ENCODE measurements at regions of chr1 and their contacts with region 1.

Region 1: GRCh38 chr1:64459743-64460142 is 10.2 kb upstream of the CACHD1 start:
- DNase-seq: no peak
- H3K4me3 ChIP-seq: no peak overlapping the region
- H3K27ac ChIP-seq: no peak overlapping the region
- H3K4me1 ChIP-seq: no peaks in the 10 kb centered on the region
- H3K27me3 ChIP-seq: no peaks in the 10 kb centered on the region
- CTCF ChIP-seq: no peak
- EP300 ChIP-seq: no peak
- POLR2A ChIP-seq: no peak

Region 2: GRCh38 chr1:64282354-64282753 is 177.4 kb before region 1 on chr1:
- intact Hi-C with region 1: loop called (anchors 10 kb)
- DNase-seq: no peak
- H3K4me3 ChIP-seq: no peak overlapping the region
- H3K27ac ChIP-seq: no peak overlapping the region
- H3K4me1 ChIP-seq: peaks cover 0 to 4% (median 0%) of the 10 kb centered on the region in 4 donors
- H3K27me3 ChIP-seq: no peaks in the 10 kb centered on the region
- CTCF ChIP-seq: no peak
- EP300 ChIP-seq: no peak
- POLR2A ChIP-seq: no peak

Region 3: DNA sequence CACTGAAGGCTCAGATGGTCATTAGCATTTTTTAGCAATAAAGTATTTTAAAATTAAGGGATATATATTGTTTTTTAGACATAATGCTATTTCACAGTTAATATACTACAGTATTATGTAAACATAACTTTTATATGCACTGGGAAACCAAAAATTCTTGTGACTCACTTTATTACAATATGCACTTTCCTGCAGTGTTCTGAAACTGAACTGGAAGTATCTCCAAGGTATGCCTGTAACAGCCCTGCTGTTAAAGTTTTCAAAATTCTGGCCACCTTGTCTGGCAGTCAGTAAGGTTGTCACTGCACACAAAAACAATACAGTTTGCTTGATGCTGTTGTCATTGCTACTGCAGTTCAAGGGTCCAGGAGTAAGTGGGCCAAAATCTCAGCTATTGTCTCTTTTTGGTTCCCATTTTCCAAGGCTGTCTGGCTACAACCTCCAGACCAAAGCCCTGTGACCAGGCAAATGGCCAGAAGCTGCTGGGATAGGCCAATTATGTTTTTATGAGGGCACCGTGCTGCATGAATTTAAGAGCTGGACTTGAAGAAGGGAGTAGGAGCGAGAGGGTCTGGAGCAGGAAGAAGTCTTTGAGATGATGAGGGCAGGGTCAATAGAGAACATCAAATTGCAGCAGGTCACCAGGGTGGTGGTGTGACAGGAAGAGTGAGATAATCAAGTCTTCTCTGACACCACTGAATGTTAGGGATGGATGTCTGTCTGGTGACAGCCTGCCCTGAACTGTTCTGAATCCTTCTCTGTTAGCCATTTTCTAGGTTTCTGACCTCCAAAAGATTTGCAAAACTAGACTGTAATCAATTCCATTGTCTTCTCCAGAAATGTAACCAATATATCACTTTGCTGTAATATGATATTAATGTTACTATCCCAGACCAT is 72.1 kb before region 1 on chr1:
- intact Hi-C with region 1: no loop called
- DNase-seq: no peak
- H3K4me3 ChIP-seq: no peak overlapping the region
- H3K27ac ChIP-seq: no peak overlapping the region
- H3K4me1 ChIP-seq: no peaks in the 10 kb centered on the region
- H3K27me3 ChIP-seq: no peaks in the 10 kb centered on the region
- CTCF ChIP-seq: no peak
- EP300 ChIP-seq: no peak
- POLR2A ChIP-seq: no peak